ENCODE measurements at regions of chr21 and their contacts with region 1.

Region 1: DNA sequence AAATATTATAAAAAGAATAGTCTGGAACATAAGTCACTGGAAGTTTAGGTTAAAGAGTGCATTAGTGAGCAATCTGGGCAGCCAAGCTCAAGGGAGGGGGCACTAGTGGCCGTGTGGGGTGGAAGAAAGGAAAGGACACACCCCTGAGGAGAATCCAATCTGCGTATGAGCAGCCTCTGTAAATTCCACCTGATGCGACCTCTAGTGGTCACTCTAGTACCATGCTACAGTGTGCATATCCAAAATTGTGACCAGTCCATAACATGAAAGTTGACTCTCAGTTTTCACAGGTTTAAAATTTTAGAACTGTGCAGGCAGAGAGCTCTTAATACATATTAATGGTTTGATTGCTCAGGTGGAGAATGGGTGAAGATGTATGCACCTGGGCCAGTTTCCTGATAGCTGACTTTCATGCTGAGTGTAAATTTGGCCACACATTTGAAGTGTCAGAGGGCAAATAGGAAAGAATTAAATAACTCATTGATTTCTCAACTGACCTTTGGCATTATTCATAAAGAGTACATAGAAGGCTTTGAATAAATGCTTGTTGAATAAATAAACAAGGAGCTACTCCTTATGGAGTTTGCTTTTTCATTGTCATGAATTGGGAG is 105.9 kb upstream of the C21orf91 start:
- DNase-seq: peak in 1 of 2 experiments; percentile 66
- H3K4me3 ChIP-seq: no peak overlapping the region
- H3K27ac ChIP-seq: no peak overlapping the region
- H3K4me1 ChIP-seq: no peaks in the 10 kb centered on the region; a peak in 2 of 7 replicates
- H3K27me3 ChIP-seq: no peaks in the 10 kb centered on the region
- CTCF ChIP-seq: peak in 2 of 3 experiments; percentile 78 to 84; a peak in 3 of 4 replicates
- EP300 ChIP-seq: no peak
- POLR2A ChIP-seq: no peak
- RAD21 ChIP-seq: peak; percentile 66 to 78

Region 2: GRCh38 chr21:17598437-17598836 is 326.7 kb before region 1 on chr21:
- CTCF ChIA-PET with region 1: no interaction called
- POLR2A ChIA-PET with region 1: no interaction called
- DNase-seq: no peak
- H3K4me3 ChIP-seq: no peak overlapping the region
- H3K27ac ChIP-seq: no peak overlapping the region
- H3K4me1 ChIP-seq: no peaks in the 10 kb centered on the region
- H3K27me3 ChIP-seq: no peaks in the 10 kb centered on the region
- CTCF ChIP-seq: no peak
- EP300 ChIP-seq: no peak
- POLR2A ChIP-seq: no peak
- RAD21 ChIP-seq: no peak

Region 3: DNA sequence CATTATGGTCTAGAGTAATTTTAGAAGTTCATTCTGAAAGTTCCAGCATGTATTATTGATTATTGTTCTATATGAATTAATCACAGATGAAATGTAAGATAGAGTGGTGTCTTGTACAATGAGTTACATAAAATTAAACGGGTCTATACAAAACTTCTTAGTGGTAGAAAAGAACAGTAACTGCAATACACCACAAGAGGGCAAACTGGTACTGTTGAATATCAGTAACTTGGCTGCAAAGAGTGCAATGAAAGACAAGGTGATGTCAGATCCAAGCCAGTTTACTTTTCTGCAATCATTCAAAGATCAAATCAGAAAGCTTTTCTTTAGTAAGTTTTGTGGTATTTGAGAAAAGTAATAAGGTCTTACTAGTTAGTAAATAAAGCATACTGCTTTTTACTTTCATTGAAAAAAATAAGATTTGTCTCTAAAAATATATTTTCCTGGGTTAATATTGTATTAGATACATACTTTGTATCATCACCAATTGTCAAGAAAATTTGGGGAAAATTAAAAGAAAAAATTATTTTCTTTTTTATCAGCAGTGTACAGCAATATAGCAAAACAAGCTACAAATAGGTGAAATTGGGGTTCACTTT is 246.0 kb before region 1 on chr21:
- CTCF ChIA-PET with region 1: interaction called, 82 read pairs
- POLR2A ChIA-PET with region 1: no interaction called
- DNase-seq: no peak
- H3K4me3 ChIP-seq: no peak overlapping the region
- H3K27ac ChIP-seq: no peak overlapping the region
- H3K4me1 ChIP-seq: no peaks in the 10 kb centered on the region
- H3K27me3 ChIP-seq: no peaks in the 10 kb centered on the region
- CTCF ChIP-seq: peak in 2 of 3 experiments; percentile 59 to 78; a peak in 3 of 4 replicates
- EP300 ChIP-seq: no peak
- POLR2A ChIP-seq: no peak
- RAD21 ChIP-seq: peak; percentile 90 to 92

Region 4: DNA sequence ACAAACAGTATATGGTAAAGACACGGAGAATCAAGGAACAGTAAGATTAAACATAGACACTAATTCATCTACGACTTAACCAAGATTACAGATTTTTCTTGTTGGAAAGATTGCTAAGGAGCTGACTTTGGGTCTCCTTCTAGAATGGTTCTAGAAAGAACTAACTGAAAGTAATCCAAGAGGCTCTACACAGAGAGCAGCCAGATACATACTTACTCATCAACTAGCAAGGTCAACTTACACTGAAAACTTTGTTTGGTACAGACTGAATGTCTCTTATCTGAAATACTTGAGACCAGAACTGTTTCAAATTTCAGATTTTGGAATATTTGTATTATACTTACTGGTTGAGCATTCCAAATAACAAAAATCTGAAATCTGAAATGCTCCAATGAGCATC is 111.8 kb before region 1 on chr21:
- CTCF ChIA-PET with region 1: interaction called, 13 read pairs
- POLR2A ChIA-PET with region 1: interaction called, 4 read pairs
- DNase-seq: no peak
- H3K4me3 ChIP-seq: no peak overlapping the region
- H3K27ac ChIP-seq: no peak overlapping the region
- H3K4me1 ChIP-seq: no peaks in the 10 kb centered on the region; a peak in 1 of 7 replicates
- H3K27me3 ChIP-seq: no peaks in the 10 kb centered on the region
- CTCF ChIP-seq: no peak
- EP300 ChIP-seq: no peak
- POLR2A ChIP-seq: no peak
- RAD21 ChIP-seq: no peak

Region 5: GRCh38 chr21:17903029-17903806 is 21.9 kb before region 1 on chr21:
- CTCF ChIA-PET with region 1: interaction called, 24 read pairs
- POLR2A ChIA-PET with region 1: no interaction called
- DNase-seq: no peak
- H3K4me3 ChIP-seq: no peak overlapping the region
- H3K27ac ChIP-seq: no peak overlapping the region
- H3K4me1 ChIP-seq: peaks cover 0 to 4% (median 2%) of the 10 kb centered on the region in 4 experiments; a peak in 3 of 7 replicates
- H3K27me3 ChIP-seq: no peaks in the 10 kb centered on the region
- CTCF ChIP-seq: no peak
- EP300 ChIP-seq: no peak
- POLR2A ChIP-seq: no peak
- RAD21 ChIP-seq: no peak

Region 6: GRCh38 chr21:17949421-17949820 is 24.3 kb after region 1 on chr21:
- CTCF ChIA-PET with region 1: interaction called, 10 read pairs
- POLR2A ChIA-PET with region 1: no interaction called
- DNase-seq: no peak
- H3K4me3 ChIP-seq: no peak overlapping the region
- H3K27ac ChIP-seq: no peak overlapping the region
- H3K4me1 ChIP-seq: no peaks in the 10 kb centered on the region
- H3K27me3 ChIP-seq: no peaks in the 10 kb centered on the region
- CTCF ChIP-seq: no peak
- EP300 ChIP-seq: no peak
- POLR2A ChIP-seq: no peak
- RAD21 ChIP-seq: no peak